T-cell (primary cell): ENCODE measurements at regions of chr10 and their contacts with region 1.

Region 1: GRCh38 chr10:121974535-121975294 is at the start of gene NSMCE4A:
- DNase-seq: peak; percentile 4 to 79 (median 53)
- ATAC-seq: peak; percentile 88 to 90 (median 89)
- H3K4me3 ChIP-seq: peak within 1 kb of the TSS; percentile 61 to 87
- H3K4me3 Mint-ChIP-seq: peak within 1 kb of the TSS; percentile 75 to 76 (median 75)
- H3K27ac ChIP-seq: peak within 1 kb of the TSS; percentile 55
- H3K27ac Mint-ChIP-seq: peak within 1 kb of the TSS in 1 of 2 donors; percentile 55
- H3K4me1 ChIP-seq: peaks cover 9 to 18% of the 10 kb centered on the region in 2 experiments
- H3K4me1 Mint-ChIP-seq: peaks cover 15 to 25% (median 22%) of the 10 kb centered on the region in 3 donors
- H3K27me3 ChIP-seq: no peaks in the 10 kb centered on the region
- H3K27me3 Mint-ChIP-seq: no peaks in the 10 kb centered on the region
- total RNA-seq, gene NSMCE4A: 41.6 to 79.7 (median 77.5) TPM

Region 2: GRCh38 chr10:121956111-121957061 is 18.3 kb before region 1 on chr10:
- CTCF ChIA-PET with region 1: interaction called in 1 of 2 experiments, 10 read pairs
- POLR2A ChIA-PET with region 1: no interaction called
- DNase-seq: no peak
- ATAC-seq: no peak
- H3K4me3 ChIP-seq: no peak overlapping the region
- H3K4me3 Mint-ChIP-seq: no peak overlapping the region
- H3K27ac ChIP-seq: no peak overlapping the region
- H3K27ac Mint-ChIP-seq: no peak overlapping the region
- H3K4me1 ChIP-seq: no peaks in the 10 kb centered on the region
- H3K4me1 Mint-ChIP-seq: no peaks in the 10 kb centered on the region
- H3K27me3 ChIP-seq: no peaks in the 10 kb centered on the region
- H3K27me3 Mint-ChIP-seq: no peaks in the 10 kb centered on the region

Region 3: DNA sequence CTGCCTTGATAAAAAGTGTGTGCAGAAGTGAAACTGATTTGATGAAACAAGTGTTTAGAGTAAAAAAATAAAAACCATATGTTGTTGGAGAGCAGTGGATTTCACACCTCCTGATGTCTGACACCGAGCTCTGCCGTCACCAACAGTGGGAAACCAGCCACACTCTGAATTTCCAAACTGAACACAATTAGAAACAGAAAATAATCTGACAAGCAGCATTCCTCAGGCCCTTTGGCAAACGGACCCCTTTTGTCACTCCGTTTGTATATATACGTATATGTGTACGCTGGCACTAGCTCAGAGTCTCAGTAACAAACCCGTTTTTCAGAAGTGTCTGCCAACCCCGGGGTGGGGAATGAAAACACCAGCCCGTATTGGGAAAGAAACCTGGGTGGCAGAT is 46.7 kb after region 1 on chr10:
- CTCF ChIA-PET with region 1: no interaction called
- POLR2A ChIA-PET with region 1: no interaction called
- DNase-seq: no peak
- ATAC-seq: no peak
- H3K4me3 ChIP-seq: no peak overlapping the region
- H3K4me3 Mint-ChIP-seq: no peak overlapping the region
- H3K27ac ChIP-seq: no peak overlapping the region
- H3K27ac Mint-ChIP-seq: no peak overlapping the region
- H3K4me1 ChIP-seq: no peaks in the 10 kb centered on the region
- H3K4me1 Mint-ChIP-seq: no peaks in the 10 kb centered on the region
- H3K27me3 ChIP-seq: peaks cover 0 to 16% of the 10 kb centered on the region in 2 experiments
- H3K27me3 Mint-ChIP-seq: peaks cover 4 to 9% of the 10 kb centered on the region in 2 donors

Region 4: DNA sequence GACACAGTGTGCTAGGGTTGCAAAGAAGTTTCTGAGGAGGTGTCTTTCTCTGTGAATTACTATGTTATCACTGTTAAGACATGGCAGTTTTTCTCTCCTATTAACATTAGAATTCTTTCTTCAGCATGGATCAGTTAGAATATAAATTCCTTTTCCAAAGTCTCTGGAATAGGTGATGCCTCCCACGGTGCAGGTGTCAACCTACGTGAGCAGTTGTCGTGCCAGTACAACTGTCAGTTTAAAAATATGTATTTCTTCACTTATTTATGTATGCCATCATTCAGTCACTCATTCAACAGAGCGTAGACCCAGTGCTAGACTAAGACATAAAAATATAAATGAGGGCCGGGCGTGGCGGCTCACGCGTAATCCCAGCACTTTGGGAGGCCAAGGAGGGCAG is 97.8 kb after region 1 on chr10:
- CTCF ChIA-PET with region 1: no interaction called
- POLR2A ChIA-PET with region 1: no interaction called
- DNase-seq: no peak
- ATAC-seq: no peak
- H3K4me3 ChIP-seq: no peak overlapping the region
- H3K4me3 Mint-ChIP-seq: no peak overlapping the region
- H3K27ac ChIP-seq: no peak overlapping the region
- H3K27ac Mint-ChIP-seq: no peak overlapping the region
- H3K4me1 ChIP-seq: no peaks in the 10 kb centered on the region
- H3K4me1 Mint-ChIP-seq: no peaks in the 10 kb centered on the region
- H3K27me3 ChIP-seq: peaks cover 0 to 9% of the 10 kb centered on the region in 2 experiments
- H3K27me3 Mint-ChIP-seq: peaks cover 0 to 13% of the 10 kb centered on the region in 2 donors

Region 5: DNA sequence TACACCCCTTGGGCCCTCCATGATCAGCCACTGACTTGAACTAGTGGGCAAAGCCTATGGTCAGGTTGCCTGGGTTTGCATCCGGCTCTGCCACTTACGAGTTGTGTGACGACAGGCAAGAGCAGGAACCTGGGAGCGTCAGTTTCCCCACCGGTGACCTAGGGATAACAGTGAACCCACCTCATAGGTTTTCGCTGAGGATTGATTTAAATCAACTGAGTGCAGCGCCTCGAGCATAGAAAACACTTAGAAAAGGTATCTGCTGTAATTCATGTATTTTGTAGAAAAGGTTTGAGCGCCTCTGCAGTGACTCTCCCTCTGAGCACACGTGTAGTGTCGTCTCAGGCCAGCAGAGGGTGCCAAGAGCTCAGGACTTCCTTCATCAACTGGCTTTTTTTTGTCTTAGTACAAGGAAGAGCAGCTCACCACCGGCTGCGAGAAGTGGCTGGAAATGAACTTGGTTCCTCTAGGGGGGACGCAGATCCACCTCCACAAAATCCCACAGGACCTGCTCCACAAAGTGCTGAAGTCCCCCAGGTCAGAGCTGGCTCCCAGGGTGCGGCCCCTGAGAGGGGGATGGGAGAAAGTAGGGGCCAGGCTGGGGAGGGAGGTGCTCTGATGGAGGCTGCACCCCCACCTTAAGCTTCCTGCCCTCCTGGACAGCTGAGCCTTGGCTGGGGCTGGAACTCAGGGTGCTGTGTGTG is 324.0 kb after region 1 on chr10:
- CTCF ChIA-PET with region 1: no interaction called
- POLR2A ChIA-PET with region 1: no interaction called
- DNase-seq: peak; percentile 32 to 83 (median 58)
- ATAC-seq: peak; percentile 81 to 84 (median 83)
- H3K4me3 ChIP-seq: no peak overlapping the region
- H3K4me3 Mint-ChIP-seq: peak overlapping the region in 1 of 3 donors; percentile 31
- H3K27ac ChIP-seq: no peak overlapping the region
- H3K27ac Mint-ChIP-seq: no peak overlapping the region
- H3K4me1 ChIP-seq: peaks cover 0 to 27% of the 10 kb centered on the region in 2 experiments
- H3K4me1 Mint-ChIP-seq: peaks cover 12 to 17% (median 14%) of the 10 kb centered on the region in 3 donors
- H3K27me3 ChIP-seq: peaks cover 0 to 19% of the 10 kb centered on the region in 2 experiments
- H3K27me3 Mint-ChIP-seq: peaks cover 0 to 4% of the 10 kb centered on the region in 2 donors